ENCODE measurements at regions of chrX and their contacts with region 1.

Region 1: DNA sequence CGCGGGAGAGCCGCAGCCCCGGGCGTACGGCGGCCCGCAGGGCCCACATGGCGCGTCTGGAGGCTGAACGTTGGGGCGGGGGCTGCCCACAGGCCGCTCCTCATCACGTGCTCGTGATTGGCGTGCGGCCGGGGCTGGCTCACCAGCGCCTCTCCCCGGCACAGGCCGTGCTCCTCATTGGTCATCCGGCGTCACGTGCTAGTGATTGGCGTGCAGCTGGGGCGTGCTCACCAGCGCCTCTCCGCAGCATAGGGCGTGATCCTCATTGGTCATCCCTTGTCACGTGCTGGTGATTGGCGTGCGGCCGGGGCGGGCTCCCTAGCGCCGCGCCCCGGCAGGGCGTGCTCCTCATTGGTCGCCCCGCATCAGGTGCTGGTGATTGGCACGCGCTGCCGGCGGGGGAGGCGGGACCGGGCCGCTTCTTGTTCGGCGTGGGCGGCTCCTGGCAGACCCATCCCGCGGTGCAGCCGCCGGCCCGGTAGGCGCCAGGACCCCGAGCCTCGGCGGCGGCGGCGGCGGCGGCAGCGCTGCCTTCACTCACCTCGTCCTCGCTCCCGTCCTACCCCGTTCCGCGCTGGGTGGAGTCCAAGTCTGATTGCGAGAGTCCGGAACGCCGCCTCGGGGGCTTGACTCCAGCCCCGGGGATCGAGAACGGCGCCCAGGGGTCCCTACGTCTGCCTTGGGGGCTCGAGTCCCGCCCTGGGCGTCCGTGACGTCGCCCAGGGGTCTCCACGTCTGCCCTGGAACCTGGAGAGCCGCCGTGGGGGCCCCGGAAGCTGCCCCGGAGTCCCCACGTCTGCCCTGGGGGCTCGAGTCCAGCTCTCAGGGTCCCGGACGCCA is at the start of gene GTPBP6:
- DNase-seq: peak; percentile 76 to 98 (median 86)
- ATAC-seq: peak; percentile 82
- H3K4me3 ChIP-seq: peak within 1 kb of the TSS; percentile 75
- H3K27ac ChIP-seq: peak within 1 kb of the TSS; percentile 94
- H3K4me1 ChIP-seq: peaks cover 5 to 35% of the 10 kb centered on the region in 2 experiments; a peak in 4 of 5 replicates
- H3K27me3 ChIP-seq: no peaks in the 10 kb centered on the region
- CTCF ChIP-seq: peak; percentile 19 to 32 (median 30); a peak in 1 of 6 replicates
- EP300 ChIP-seq: no peak
- POLR2A ChIP-seq: peak; percentile 67
- RAD21 ChIP-seq: no peak
- polyA plus RNA-seq, gene GTPBP6: 0.24 to 0.50 TPM

Region 2: GRCh38 chrX:259692-260348 is 59.1 kb before region 1 on chrX:
- CTCF ChIA-PET with region 1: no interaction called
- POLR2A ChIA-PET with region 1: no interaction called
- in situ Hi-C with region 1: no loop called
- intact Hi-C with region 1: no loop called
- DNase-seq: peak in 2 of 4 experiments; percentile 3 to 9
- ATAC-seq: peak; percentile 40
- H3K4me3 ChIP-seq: no peak overlapping the region
- H3K27ac ChIP-seq: no peak overlapping the region
- H3K4me1 ChIP-seq: peaks cover 9 to 21% of the 10 kb centered on the region in 2 experiments
- H3K27me3 ChIP-seq: no peaks in the 10 kb centered on the region
- CTCF ChIP-seq: no peak
- EP300 ChIP-seq: no peak
- POLR2A ChIP-seq: no peak
- RAD21 ChIP-seq: no peak

Region 3: DNA sequence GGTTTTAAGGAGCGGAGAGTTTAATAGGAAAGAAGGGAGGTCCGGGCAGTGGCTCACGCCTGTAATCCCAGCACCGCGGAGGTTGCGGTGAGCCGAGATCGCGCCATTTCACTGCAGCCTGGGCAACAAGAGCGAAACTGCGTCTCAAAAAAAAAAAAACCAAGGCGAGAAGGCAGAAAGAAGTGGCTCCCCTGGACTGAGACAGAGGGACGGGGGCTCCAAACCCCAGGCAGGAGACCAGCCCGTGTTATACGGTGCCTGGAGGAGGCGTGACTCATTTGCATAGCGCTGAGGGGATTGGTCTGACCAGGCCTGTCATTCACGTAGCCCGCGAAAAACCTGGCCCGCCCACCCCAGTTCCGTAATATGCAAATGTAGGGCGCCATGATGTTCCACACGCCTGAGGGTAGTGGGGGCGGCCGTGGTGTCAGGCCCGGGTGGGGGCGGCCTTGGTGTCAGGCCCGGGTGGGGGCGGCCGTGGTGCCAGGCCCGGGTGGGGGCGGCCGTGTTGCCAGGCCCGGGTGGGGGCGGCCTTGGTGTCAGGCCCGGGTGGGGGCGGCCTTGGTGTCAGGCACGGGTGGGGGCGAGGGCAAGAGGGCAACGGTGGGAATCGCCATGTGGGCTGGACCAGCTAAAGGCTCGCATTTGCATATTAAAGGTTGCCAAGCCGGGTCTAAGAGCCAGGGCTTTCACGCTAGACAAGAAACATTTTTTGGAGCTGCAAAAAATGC is 35.7 kb before region 1 on chrX:
- CTCF ChIA-PET with region 1: no interaction called
- POLR2A ChIA-PET with region 1: no interaction called
- in situ Hi-C with region 1: no loop called
- intact Hi-C with region 1: loop called (anchors 1 kb)
- DNase-seq: peak; percentile 77 to 95 (median 84)
- ATAC-seq: peak; percentile 97
- H3K4me3 ChIP-seq: peak overlapping the region; percentile 46
- H3K27ac ChIP-seq: peak overlapping the region; percentile 90
- H3K4me1 ChIP-seq: peaks cover 4 to 20% of the 10 kb centered on the region in 2 experiments; a peak in 4 of 5 replicates
- H3K27me3 ChIP-seq: no peaks in the 10 kb centered on the region
- CTCF ChIP-seq: no peak
- EP300 ChIP-seq: no peak
- POLR2A ChIP-seq: peak; percentile 87
- RAD21 ChIP-seq: no peak

Measured in K562 (cell line).